BJ (cell line): ENCODE measurements at regions of chr5 and their contacts with region 1.

Region 1: GRCh38 chr5:153562189-153562588 is 71.7 kb downstream of the GRIA1 start:
- DNase-seq: peak; percentile 61
- H3K4me3 ChIP-seq: no peak overlapping the region
- H3K27me3 ChIP-seq: no peaks in the 10 kb centered on the region
- CTCF ChIP-seq: no peak

Region 2: DNA sequence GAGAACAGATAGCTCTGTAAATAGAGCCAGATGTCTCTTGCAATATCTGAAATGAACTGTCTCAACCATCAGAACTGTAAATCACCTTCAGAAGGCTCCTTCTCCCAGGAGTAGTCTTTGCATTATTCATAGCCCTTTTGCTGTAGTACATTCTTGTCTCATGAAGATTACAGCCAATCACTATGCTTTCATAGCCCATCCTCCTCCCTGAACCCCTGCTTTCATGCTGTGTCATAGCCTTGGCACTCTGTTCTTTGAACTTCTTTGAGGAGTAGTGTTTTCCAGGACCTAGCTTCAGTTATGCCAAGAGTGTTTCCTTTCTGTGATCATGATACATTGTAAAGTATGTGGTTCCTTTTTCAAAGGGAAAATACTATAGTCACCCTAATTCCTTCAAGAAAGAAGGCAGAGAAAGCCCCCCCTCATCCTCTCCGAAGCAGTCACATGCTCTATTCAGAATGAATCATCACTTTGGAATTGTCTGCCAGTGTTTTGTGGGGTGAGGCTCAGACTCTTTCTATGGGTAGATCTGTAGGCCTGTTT is 10.6 kb before region 1 on chr5:
- CTCF ChIA-PET with region 1: interaction called, 12 read pairs
- POLR2A ChIA-PET with region 1: no interaction called
- DNase-seq: peak; percentile 86
- H3K4me3 ChIP-seq: no peak overlapping the region
- H3K27me3 ChIP-seq: no peaks in the 10 kb centered on the region
- CTCF ChIP-seq: no peak